CD8-positive, alpha-beta T cell (primary cell): ENCODE measurements at regions of chr1 and their contacts with region 1.

Region 1: DNA sequence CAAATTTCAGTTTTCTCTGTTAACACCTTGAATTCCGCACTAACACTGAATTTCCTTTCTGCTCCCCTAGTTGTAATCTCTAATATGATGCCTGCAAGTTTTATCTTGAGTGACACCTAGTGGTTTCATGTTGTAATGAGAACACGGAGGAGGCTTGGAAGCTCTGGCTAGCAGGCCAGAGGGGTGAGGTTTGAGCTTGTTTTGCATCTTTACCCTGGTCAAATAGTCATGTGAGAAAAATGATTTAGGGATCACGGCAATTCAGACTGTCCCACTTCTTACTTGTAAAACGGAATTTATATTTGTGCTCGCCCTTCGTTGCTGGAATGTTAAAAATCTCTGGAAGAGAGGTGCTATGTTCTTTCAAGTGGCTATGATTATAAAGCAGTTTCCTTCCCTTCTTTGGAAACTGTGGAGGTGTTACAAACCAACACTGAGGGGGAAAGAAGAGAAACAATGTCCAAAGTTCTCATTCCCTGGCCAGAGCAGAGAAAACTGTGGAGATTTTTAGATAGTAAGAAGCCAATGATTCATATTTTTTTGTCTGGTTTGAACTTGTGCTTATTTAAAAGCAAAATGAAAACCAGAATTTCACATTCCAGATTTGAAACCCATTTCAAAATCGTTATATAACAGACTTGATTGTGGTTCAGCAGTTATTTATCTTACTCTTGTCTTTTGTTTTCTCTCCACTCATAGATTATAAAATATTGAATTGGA is 5.3 kb upstream of the MROH9 start:
- DNase-seq: peak in 3 of 9 experiments; percentile 8 to 52 (median 41)
- ATAC-seq: no peak
- H3K4me3 ChIP-seq: no peak overlapping the region
- H3K4me3 Mint-ChIP-seq: no peak overlapping the region
- H3K27ac ChIP-seq: no peak overlapping the region
- H3K27ac Mint-ChIP-seq: no peak overlapping the region
- H3K4me1 ChIP-seq: no peaks in the 10 kb centered on the region
- H3K4me1 Mint-ChIP-seq: no peaks in the 10 kb centered on the region
- H3K27me3 ChIP-seq: no peaks in the 10 kb centered on the region
- H3K27me3 Mint-ChIP-seq: peaks cover 2% of the 10 kb centered on the region
- CTCF ChIP-seq: peak; percentile 80

Region 2: DNA sequence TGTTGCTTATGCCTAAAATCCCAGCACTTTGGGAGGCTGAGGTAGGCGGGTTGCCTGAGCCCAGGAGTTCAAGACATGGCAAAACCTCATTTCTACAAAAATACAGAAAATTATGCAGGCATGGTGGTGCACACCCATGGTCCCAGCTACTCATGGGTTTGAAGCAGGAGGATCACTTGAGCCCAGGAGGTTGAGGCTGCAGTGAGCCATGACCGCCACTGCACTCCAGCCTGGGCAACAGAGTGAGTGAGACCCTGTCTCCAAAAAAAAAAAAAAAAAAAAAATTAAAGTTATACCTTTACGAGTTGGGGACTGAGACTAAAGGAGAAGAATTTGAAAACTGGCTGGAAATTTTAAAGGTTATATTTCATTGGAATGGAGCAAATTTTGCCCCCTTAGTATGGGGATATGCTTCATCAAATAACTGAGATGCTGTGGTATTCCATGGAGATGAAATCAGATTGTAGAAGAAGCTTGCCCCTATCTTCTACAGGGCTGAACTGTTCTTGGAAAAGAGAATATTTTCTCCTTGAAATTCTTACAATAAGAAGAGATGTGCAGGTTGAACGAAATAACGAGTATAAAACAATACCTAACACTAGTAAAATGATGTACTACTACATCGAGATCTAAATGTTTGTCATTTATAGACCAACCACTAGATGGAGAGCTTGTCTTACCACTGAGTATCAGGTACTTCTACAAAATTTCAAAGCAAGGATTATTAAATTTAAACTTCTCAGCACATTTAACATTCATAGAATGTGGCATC is 1001.4 kb before region 1 on chr1:
- CTCF ChIA-PET with region 1: interaction called, 7 read pairs
- POLR2A ChIA-PET with region 1: no interaction called
- intact Hi-C with region 1: loop called (anchors 1 kb)
- DNase-seq: peak in 2 of 9 experiments; percentile 52 to 66
- ATAC-seq: peak; percentile 58
- H3K4me3 ChIP-seq: no peak overlapping the region
- H3K4me3 Mint-ChIP-seq: no peak overlapping the region
- H3K27ac ChIP-seq: no peak overlapping the region
- H3K27ac Mint-ChIP-seq: no peak overlapping the region
- H3K4me1 ChIP-seq: no peaks in the 10 kb centered on the region
- H3K4me1 Mint-ChIP-seq: peaks cover 6% of the 10 kb centered on the region
- H3K27me3 ChIP-seq: no peaks in the 10 kb centered on the region
- H3K27me3 Mint-ChIP-seq: no peaks in the 10 kb centered on the region
- CTCF ChIP-seq: peak; percentile 93

Region 3: GRCh38 chr1:170010443-170010842 is 919.6 kb before region 1 on chr1:
- CTCF ChIA-PET with region 1: no interaction called
- POLR2A ChIA-PET with region 1: no interaction called
- intact Hi-C with region 1: loop called in 1 of 2 experiments (anchors 1 kb)
- DNase-seq: peak in 4 of 9 experiments; percentile 11 to 37 (median 16)
- ATAC-seq: no peak
- H3K4me3 ChIP-seq: no peak overlapping the region
- H3K4me3 Mint-ChIP-seq: no peak overlapping the region
- H3K27ac ChIP-seq: no peak overlapping the region
- H3K27ac Mint-ChIP-seq: no peak overlapping the region
- H3K4me1 ChIP-seq: no peaks in the 10 kb centered on the region
- H3K4me1 Mint-ChIP-seq: no peaks in the 10 kb centered on the region
- H3K27me3 ChIP-seq: no peaks in the 10 kb centered on the region
- H3K27me3 Mint-ChIP-seq: no peaks in the 10 kb centered on the region
- CTCF ChIP-seq: peak; percentile 20